Psoas muscle (tissue), 8 donors: ENCODE measurements at regions of chr11 and their contacts with region 1.

Region 1: DNA sequence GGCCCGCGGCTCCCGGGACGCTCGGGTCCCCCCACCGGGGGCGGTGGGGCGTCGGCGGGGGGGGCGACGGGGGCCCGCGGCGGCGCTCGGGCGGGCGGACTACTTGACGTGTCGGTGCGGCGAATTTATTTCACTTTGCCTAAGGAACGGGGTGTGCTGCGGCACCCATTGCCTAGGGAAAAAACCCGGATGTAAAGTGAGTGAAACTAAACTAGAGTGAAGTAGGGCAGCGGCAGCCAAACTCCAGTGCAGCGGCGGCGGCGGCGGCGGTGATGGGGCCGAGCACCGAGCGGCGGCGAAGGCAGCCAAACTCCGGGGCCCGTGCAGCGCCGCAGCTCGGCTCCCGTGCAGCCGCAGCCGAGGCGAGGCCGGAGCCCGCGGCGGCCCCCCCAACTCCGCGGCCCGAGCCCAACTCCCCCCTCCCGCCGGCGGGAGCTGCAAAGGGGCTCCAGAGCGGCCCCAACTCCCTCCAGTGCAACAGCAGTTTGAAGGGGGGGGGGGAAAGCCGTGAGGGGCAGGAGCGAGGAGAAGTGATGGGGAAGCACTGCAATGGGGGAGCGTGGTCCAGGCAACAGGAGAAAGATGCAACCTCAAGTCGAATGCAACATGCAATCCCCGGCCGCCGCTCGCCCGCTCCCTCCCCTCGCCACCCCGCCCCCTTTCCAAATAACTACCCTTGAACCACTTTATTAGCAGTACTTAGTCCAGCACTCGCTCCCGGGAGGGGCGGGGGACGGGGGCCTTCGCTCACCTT is 647 bp upstream of the PHF21A start:
- DNase-seq: peak; percentile 79 to 89
- ATAC-seq: peak; percentile 44 to 61 (median 50)
- H3K4me3 ChIP-seq: peak overlapping the region; percentile 78
- H3K27ac ChIP-seq: peak overlapping the region; percentile 87
- H3K4me1 ChIP-seq: peaks cover 28% of the 10 kb centered on the region
- H3K27me3 ChIP-seq: no peaks in the 10 kb centered on the region
- CTCF ChIP-seq: no peak

Region 2: DNA sequence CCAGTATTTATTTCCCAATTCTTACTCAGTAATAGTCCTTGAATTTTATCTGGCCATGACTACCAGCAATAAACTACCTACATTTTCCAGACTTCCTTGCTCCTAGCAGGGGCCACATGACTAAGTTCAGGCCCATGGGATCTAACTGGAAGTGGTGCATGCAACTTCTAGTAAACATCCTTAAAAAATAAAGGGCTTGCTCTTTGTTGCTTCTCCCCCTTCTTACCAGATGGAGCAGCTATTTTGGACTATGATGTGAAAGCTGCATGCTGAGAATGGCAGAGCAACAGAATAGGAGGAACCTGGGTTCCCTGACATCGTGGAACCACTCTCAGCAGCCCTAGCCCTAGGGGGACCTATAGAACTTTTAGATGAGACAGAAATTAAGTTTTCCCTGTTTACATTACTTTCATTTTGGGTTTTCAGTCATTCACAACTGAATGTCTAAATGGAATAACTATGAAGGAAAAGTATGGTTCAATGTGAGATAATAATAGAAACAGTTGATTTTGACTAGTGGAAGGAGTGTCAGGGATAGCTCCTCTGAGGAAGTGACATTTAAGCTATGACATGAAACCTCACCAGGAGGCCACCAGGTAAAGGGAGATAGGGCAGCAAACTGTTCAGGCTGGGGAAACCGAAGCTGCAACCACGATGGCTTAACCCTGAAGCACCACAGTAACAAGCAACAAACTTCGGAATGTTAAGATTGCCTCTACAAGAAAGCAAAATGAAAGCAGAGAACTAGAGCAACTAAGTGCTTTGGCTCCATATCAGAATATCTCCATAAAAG is 49.5 kb before region 1 on chr11:
- intact Hi-C with region 1: loop called in 1 of 2 experiments (anchors 5 kb)
- DNase-seq: no peak
- ATAC-seq: peak in 1 of 4 donors; percentile 44
- H3K4me3 ChIP-seq: no peak overlapping the region
- H3K27ac ChIP-seq: no peak overlapping the region
- H3K4me1 ChIP-seq: no peaks in the 10 kb centered on the region
- H3K27me3 ChIP-seq: no peaks in the 10 kb centered on the region
- CTCF ChIP-seq: no peak

Region 3: GRCh38 chr11:46338988-46339666 is 217.2 kb after region 1 on chr11:
- intact Hi-C with region 1: loop called in 1 of 2 experiments (anchors 10 kb)
- DNase-seq: peak in 1 of 2 donors; percentile 33
- ATAC-seq: peak; percentile 64 to 89 (median 77)
- H3K4me3 ChIP-seq: peak overlapping the region; percentile 59
- H3K27ac ChIP-seq: peak overlapping the region; percentile 62
- H3K4me1 ChIP-seq: peaks cover 18% of the 10 kb centered on the region
- H3K27me3 ChIP-seq: peaks cover 0 to 4% (median 2%) of the 10 kb centered on the region in 3 donors
- CTCF ChIP-seq: no peak